ENCODE measurements at regions of chr11 and their contacts with region 1.

Region 1: GRCh38 chr11:75814686-75815344 is at the start of gene UVRAG:
- DNase-seq: peak; percentile 96
- ATAC-seq: peak; percentile 85
- H3K4me3 Mint-ChIP-seq: no peak within 1 kb of the TSS
- H3K27ac Mint-ChIP-seq: peak within 1 kb of the TSS; percentile 96
- H3K4me1 Mint-ChIP-seq: peaks cover 53% of the 10 kb centered on the region
- H3K27me3 Mint-ChIP-seq: no peaks in the 10 kb centered on the region
- CTCF ChIP-seq: no peak
- total RNA-seq, gene UVRAG: 86.8 and 103 TPM in 2 replicates

Region 2: GRCh38 chr11:75802913-75803820 is 11.6 kb before region 1 on chr11:
- CTCF ChIA-PET with region 1: interaction called, 18 read pairs
- POLR2A ChIA-PET with region 1: interaction called, 6 read pairs
- intact Hi-C with region 1: loop called (anchors 1 kb)
- DNase-seq: peak; percentile 50
- ATAC-seq: peak; percentile 95
- H3K4me3 Mint-ChIP-seq: no peak overlapping the region
- H3K27ac Mint-ChIP-seq: no peak overlapping the region
- H3K4me1 Mint-ChIP-seq: peaks cover 15% of the 10 kb centered on the region
- H3K27me3 Mint-ChIP-seq: no peaks in the 10 kb centered on the region
- CTCF ChIP-seq: peak; percentile 17

Region 3: DNA sequence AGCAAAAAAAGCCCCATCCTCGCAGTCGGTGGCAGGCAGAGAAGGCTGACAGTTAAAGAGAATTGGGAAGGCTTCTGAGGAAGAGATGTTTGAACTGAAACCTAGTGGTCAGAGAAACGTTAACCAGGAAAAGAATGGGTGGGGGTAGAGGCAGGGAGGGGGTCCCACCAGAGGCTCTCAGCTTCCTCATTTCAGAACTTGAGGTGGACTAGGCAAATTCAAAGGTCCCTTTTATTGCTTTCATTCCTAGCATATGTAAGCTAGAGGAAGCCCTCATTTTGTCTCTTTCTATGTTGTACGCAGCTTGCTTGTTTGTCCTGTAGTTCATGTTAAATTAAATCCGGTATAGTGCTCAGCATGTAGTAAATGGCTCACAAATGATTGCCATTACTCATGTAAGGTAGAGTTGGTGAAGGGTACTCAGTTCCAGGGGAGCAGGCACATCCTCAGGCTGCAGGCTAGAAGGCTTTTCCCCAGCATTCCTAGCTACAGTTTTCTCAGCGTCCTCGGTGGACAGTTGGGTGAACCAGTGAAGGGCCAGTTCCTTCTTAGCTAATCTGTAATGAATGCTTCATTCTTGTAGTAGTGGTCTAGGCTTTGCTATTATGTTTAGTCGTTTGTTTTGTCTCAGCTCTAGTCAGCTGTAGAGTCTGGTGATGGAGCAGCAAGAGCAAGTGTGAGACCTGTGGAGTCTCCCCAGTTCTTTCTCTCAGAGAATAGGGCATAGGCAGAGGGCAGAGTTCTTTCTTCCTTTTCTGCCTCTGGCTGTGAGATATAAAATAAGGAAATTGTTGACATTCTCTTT is 58.8 kb after region 1 on chr11:
- CTCF ChIA-PET with region 1: interaction called, 11 read pairs
- POLR2A ChIA-PET with region 1: interaction called, 4 read pairs
- intact Hi-C with region 1: no loop called
- DNase-seq: no peak
- ATAC-seq: peak; percentile 79
- H3K4me3 Mint-ChIP-seq: peak overlapping the region; percentile 79
- H3K27ac Mint-ChIP-seq: peak overlapping the region; percentile 93
- H3K4me1 Mint-ChIP-seq: peaks cover 69% of the 10 kb centered on the region
- H3K27me3 Mint-ChIP-seq: no peaks in the 10 kb centered on the region
- CTCF ChIP-seq: no peak

Region 4: GRCh38 chr11:75946531-75947530 is 132.0 kb after region 1 on chr11:
- CTCF ChIA-PET with region 1: no interaction called
- POLR2A ChIA-PET with region 1: no interaction called
- intact Hi-C with region 1: no loop called
- DNase-seq: no peak
- ATAC-seq: no peak
- H3K4me3 Mint-ChIP-seq: no peak overlapping the region
- H3K27ac Mint-ChIP-seq: peak overlapping the region; percentile 27
- H3K4me1 Mint-ChIP-seq: peaks cover 61% of the 10 kb centered on the region
- H3K27me3 Mint-ChIP-seq: no peaks in the 10 kb centered on the region
- CTCF ChIP-seq: no peak

Region 5: GRCh38 chr11:76380967-76381719 is 566.3 kb after region 1 on chr11 and contains the starts of genes GVQW3 and THAP12:
- CTCF ChIA-PET with region 1: no interaction called
- POLR2A ChIA-PET with region 1: no interaction called
- intact Hi-C with region 1: loop called (anchors 1 kb)
- DNase-seq: peak; percentile 97
- ATAC-seq: peak; percentile 87
- H3K4me3 Mint-ChIP-seq: peak within 1 kb of the TSS; percentile 94
- H3K27ac Mint-ChIP-seq: peak within 1 kb of the TSS; percentile 88
- H3K4me1 Mint-ChIP-seq: peaks cover 63% of the 10 kb centered on the region
- H3K27me3 Mint-ChIP-seq: no peaks in the 10 kb centered on the region
- CTCF ChIP-seq: no peak
- total RNA-seq, gene GVQW3: 2.6 and 3.0 TPM in 2 replicates
- total RNA-seq, gene THAP12: 56.5 and 60.2 TPM in 2 replicates

Measured in activated B cell treated with CpG ODN at 0.5 μM for 24 hours (primary cell).